Mucosa of descending colon (tissue), 3 donors: ENCODE measurements at regions of chr14 and their contacts with region 1.

Region 1: GRCh38 chr14:21092273-21093011 is 6.0 kb downstream of the ZNF219 start:
- DNase-seq: peak; percentile 92 to 95 (median 93)
- ATAC-seq: peak; percentile 93
- H3K4me3 ChIP-seq: no peak overlapping the region
- H3K4me1 ChIP-seq: peaks cover 26% of the 10 kb centered on the region
- CTCF ChIP-seq: peak; percentile 100

Region 2: GRCh38 chr14:21014761-21015190 is 77.7 kb before region 1 on chr14:
- intact Hi-C with region 1: loop called in 1 of 2 experiments (anchors 10 kb)
- DNase-seq: peak in 2 of 3 donors; percentile 80 to 96
- ATAC-seq: peak; percentile 93
- H3K4me3 ChIP-seq: no peak overlapping the region
- H3K4me1 ChIP-seq: no peaks in the 10 kb centered on the region
- CTCF ChIP-seq: peak; percentile 75